ENCODE measurements at regions of chr2 and their contacts with region 1.

Region 1: GRCh38 chr2:54838585-54839035 is 115.1 kb downstream of the EML6 start:
- DNase-seq: peak; percentile 28 to 57
- ATAC-seq: peak in 7 of 8 donors; percentile 69 to 92 (median 84)
- H3K4me3 ChIP-seq: no peak overlapping the region
- H3K27ac ChIP-seq: no peak overlapping the region
- H3K4me1 ChIP-seq: peaks cover 0 to 3% (median 0%) of the 10 kb centered on the region in 9 donors
- H3K27me3 ChIP-seq: no peaks in the 10 kb centered on the region
- CTCF ChIP-seq: peak; percentile 76 to 96 (median 92)

Region 2: GRCh38 chr2:54106631-54107454 is 731.8 kb before region 1 on chr2:
- intact Hi-C with region 1: loop called in 7 of 10 experiments (anchors 2 to 10 kb)
- DNase-seq: peak in 1 of 2 donors; percentile 36
- ATAC-seq: peak in 7 of 8 donors; percentile 65 to 84 (median 74)
- H3K4me3 ChIP-seq: no peak overlapping the region
- H3K27ac ChIP-seq: no peak overlapping the region
- H3K4me1 ChIP-seq: peaks cover 0 to 15% (median 9%) of the 10 kb centered on the region in 9 donors
- H3K27me3 ChIP-seq: no peaks in the 10 kb centered on the region
- CTCF ChIP-seq: peak; percentile 33 to 77 (median 67)

Region 3: DNA sequence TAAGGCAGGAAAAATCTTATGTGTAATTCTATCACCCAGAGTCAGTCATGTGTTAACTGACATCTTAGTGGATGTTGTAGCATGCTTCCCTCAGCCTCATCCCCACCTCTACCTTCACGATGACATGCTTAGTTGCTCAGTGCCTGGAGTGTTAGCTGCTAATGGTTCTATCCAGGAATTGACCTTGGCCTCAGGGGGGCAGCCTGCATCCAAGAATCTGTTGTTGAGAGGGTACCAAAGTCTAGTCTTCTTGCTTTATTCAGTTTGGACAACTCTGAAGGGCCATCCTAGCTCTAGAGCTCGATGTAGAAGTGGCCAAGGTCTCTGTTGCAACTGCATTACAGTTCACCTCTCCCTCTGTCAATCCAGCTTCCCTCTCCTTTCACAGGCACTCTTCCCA is 662.0 kb before region 1 on chr2:
- intact Hi-C with region 1: loop called in 2 of 10 experiments (anchors 10 kb)
- DNase-seq: peak; percentile 37 to 58
- ATAC-seq: peak in 7 of 8 donors; percentile 58 to 92 (median 85)
- H3K4me3 ChIP-seq: no peak overlapping the region
- H3K27ac ChIP-seq: no peak overlapping the region
- H3K4me1 ChIP-seq: peaks cover 0 to 5% (median 0%) of the 10 kb centered on the region in 9 donors
- H3K27me3 ChIP-seq: no peaks in the 10 kb centered on the region
- CTCF ChIP-seq: peak in 8 of 9 donors; percentile 21 to 71 (median 54)

Region 4: DNA sequence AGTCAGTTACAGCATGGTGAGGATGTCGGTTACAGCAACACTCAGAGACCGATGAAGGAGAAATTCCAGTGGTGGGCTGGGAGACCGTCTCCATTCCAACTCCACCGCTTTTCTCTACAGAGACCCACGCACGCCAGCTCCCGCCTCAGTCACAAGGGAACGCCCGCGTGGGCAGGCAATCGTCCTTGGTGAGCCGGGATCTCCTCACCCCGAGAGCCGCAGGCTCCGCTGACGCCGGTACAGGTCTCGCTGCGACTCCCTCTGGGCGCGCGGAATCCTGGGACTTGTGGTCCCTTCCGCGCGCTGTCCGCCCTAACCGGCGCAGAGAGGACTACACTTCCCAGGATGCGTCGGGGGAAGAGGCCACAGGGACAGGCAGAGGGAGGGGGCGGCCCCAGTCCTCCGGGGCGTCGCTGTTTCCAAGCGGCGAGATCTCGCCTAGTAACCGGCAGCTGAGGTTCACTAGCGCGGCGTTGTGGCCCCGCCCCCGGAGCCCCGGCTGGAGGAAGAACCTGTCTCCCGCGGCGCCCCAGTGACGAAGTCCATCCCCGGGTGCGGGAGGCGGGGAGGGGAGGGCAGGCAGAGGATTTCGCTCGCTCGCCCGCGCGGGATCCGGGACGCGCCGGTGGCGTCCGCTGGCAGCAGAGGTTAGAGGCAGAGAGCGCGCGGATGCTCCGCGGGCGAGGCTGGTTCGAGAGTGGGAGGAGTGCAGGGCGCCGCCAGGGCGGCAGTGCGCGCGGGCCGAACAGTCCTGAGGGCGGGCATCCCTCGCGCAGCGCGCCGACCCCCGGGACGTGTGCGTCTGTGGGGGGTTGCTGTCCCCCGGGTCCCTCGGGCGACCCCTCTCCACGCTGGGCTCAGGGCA is 115.2 kb before region 1 on chr2 and contains the start of gene EML6:
- intact Hi-C with region 1: loop called in 4 of 10 experiments (anchors 10 kb)
- DNase-seq: peak; percentile 97 to 98
- ATAC-seq: peak; percentile 99 to 100 (median 100)
- H3K4me3 ChIP-seq: peak within 1 kb of the TSS; percentile 65 to 93 (median 82)
- H3K27ac ChIP-seq: peak within 1 kb of the TSS in 9 of 10 donors; percentile 65 to 81 (median 70)
- H3K4me1 ChIP-seq: peaks cover 0 to 17% (median 9%) of the 10 kb centered on the region in 9 donors
- H3K27me3 ChIP-seq: peaks cover 0 to 50% (median 0%) of the 10 kb centered on the region in 7 donors
- CTCF ChIP-seq: peak in 7 of 9 donors; percentile 16 to 47 (median 27)
- total RNA-seq, gene EML6: 0.12 to 1.5 (median 0.32) TPM

Region 5: DNA sequence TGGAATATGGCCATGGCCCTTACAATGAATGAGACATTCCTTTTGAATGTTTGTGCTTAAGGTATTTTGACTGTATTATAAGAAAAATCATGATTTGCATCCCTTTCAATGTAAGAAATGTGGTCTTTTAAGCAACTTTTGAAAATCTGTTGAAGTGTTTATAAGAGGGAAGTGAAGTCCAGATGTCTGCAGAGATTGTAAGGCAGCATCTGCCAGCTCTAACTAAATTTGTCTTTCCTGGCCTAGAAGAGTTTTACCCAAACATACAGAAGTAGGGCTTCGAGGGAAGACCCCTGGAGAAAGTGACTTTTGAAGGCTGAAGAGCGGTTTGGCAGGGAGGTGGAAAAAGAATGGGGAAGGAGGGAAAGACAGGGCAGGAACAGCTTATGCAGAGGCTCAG is 103.0 kb before region 1 on chr2:
- intact Hi-C with region 1: loop called in 1 of 10 experiments (anchors 10 kb)
- DNase-seq: no peak
- ATAC-seq: no peak
- H3K4me3 ChIP-seq: no peak overlapping the region
- H3K27ac ChIP-seq: no peak overlapping the region
- H3K4me1 ChIP-seq: no peaks in the 10 kb centered on the region
- H3K27me3 ChIP-seq: peaks cover 0 to 9% (median 0%) of the 10 kb centered on the region in 7 donors
- CTCF ChIP-seq: no peak

Measured in heart right ventricle (tissue), 16 donors.